Activated CD4-positive, alpha-beta memory T cell treated with anti-CD3 and anti-CD28 coated beads, Interleukin-2, amount 10 ng/mL, durations not matched to agents 7 days and 5 days (primary cell): ENCODE measurements at regions of chr1 and their contacts with region 1.

Region 1: DNA sequence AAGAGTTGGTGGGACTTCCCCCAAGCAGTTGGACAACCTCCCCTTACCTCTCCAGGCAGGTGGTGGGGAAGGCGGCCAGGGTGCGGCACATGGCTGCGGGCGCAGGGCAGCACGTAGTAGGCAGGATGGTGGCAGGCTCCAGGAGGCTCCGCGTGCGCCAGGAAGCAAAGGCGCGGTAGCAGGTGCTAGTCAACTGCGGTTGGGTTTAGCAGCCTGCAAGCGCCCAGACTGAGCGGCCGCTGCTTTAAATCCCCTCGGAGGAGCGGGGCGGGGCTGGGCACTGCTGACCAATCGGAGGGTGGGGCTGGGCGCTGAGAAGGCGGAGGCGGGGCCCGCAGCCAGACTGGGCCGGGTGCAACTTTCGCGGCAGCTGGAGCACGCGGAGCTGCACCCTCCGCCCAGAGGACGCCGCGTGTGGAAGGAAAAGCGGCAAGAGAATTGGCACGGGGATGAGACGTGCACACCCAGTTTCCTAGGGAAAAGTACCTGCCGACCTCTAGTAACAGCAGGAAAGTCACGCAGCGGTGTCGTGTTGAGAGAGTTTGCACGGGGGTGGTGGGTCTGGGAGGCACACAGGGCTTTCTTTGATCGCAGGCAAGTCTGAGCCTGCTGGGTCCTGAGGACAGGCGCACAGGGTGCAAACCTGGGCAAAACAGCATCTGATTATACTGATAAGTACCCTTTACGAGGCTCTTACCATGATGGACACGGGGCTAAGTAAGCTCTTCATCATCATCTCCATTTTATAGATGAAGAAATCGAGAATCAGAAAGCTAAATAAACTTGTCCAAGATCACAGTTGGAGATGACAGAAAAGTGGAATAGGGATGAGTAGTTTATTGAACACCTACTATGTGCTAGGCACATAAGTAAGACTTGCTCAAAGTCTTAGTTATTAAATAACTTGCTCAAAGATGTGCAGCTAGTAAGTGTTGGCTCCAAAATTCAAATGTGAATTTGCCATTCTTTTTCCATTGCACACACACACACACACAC is at the start of gene RGS16:
- DNase-seq: peak; percentile 94
- H3K4me3 Mint-ChIP-seq: no peak within 1 kb of the TSS
- H3K27ac Mint-ChIP-seq: no peak within 1 kb of the TSS
- H3K4me1 Mint-ChIP-seq: peaks cover 11% of the 10 kb centered on the region
- H3K27me3 Mint-ChIP-seq: peaks cover 30% of the 10 kb centered on the region
- total RNA-seq, gene RGS16: 6.4 to 6.9 TPM

Region 2: DNA sequence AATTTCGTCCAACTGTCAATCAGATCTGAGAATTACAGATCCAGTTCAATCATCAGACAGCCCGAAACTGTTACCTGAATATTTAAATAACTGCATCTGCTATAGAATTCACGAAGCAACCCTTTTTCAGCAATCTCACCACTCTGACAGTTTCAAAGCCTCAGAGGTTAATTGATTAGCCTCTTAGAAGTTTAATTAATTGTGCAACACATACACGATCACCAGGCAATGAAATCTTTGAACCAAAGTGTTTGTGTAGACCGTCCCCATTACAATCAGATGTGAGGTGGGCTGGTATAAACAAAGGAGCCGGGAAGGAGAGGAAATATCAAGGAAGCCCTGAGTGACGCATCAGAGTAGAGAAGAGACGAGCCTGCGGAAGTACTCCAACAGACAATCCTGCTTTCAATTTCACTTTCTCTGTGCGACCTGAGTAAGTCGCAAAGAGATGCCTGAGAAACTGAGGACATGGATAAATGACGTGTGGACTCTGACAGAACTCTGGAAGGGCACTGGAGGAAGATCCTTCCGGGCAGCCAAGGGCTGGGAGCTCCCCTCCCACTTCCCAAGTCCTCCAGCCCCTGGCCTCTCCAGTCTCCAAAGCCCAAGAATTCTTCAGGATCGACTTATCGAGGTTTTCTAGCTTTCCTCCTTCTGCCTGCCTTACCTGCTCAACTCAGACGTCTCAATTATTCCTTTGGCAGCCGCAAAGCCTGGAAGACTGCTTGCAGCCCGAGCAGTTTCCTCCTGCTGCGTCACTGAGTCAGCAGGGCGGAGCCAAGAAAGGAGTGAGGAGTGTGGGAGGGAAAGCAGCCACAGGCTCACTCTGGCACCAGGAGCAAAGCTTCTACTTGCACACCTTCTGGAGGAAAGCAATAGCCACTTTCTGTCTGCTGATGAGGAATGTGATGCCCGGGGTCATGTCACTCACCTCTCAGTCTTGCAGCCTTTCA is 15.7 kb before region 1 on chr1 and contains the start of gene RNASEL:
- CTCF ChIA-PET with region 1: interaction called, 52 read pairs
- POLR2A ChIA-PET with region 1: interaction called, 10 read pairs
- DNase-seq: peak; percentile 61
- H3K4me3 Mint-ChIP-seq: peak within 1 kb of the TSS; percentile 94
- H3K27ac Mint-ChIP-seq: peak within 1 kb of the TSS; percentile 94
- H3K4me1 Mint-ChIP-seq: peaks cover 33% of the 10 kb centered on the region
- H3K27me3 Mint-ChIP-seq: peaks cover 6% of the 10 kb centered on the region
- total RNA-seq, gene RNASEL: 8.4 to 8.8 TPM

Region 3: GRCh38 chr1:182614796-182615454 is 10.5 kb after region 1 on chr1:
- CTCF ChIA-PET with region 1: interaction called, 38 read pairs
- POLR2A ChIA-PET with region 1: interaction called, 79 read pairs
- DNase-seq: peak; percentile 52
- H3K4me3 Mint-ChIP-seq: peak overlapping the region; percentile 66
- H3K27ac Mint-ChIP-seq: peak overlapping the region; percentile 79
- H3K4me1 Mint-ChIP-seq: peaks cover 45% of the 10 kb centered on the region
- H3K27me3 Mint-ChIP-seq: peaks cover 78% of the 10 kb centered on the region

Region 4: GRCh38 chr1:182629499-182630096 is 25.1 kb after region 1 on chr1:
- CTCF ChIA-PET with region 1: interaction called, 4 read pairs
- POLR2A ChIA-PET with region 1: interaction called, 11 read pairs
- DNase-seq: peak; percentile 64
- H3K4me3 Mint-ChIP-seq: no peak overlapping the region
- H3K27ac Mint-ChIP-seq: no peak overlapping the region
- H3K4me1 Mint-ChIP-seq: peaks cover 60% of the 10 kb centered on the region
- H3K27me3 Mint-ChIP-seq: peaks cover 23% of the 10 kb centered on the region

Region 5: DNA sequence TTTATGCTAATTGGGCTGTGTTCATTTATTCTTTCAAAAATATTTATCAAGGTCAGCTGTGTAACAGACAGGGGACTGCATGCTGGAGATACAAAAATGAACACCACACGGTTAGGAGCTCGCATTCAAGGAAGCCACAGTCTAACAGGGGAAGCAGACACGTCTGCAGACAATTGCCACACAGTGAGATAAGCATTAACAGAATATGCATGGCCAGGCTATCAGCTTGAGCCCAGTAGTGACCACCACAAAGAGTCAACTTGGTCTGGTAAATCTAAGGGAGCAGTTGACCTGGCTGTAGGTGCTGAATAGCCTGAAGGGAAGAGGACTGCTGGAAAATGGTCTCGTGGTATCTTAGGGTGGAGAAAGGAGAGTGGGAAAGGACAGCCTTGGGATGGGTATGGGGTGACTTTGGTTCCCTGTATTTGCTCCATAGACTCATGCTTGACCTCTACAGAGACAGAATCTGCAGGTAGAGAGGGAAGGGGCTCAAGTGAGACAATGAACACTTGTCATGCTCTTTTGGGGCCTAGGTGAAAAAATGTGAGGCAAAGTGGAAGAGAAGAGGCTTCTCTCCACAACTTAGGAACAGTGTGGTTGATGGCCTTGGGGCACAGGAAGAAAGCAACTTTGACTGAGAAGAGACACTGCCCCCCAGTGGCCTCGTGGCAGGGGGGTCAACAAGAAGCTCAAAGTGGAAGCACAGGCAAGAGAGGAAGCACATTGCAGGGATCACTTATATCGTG is 177.5 kb after region 1 on chr1:
- CTCF ChIA-PET with region 1: interaction called, 531 read pairs
- POLR2A ChIA-PET with region 1: interaction called, 11 read pairs
- DNase-seq: peak; percentile 76
- H3K4me3 Mint-ChIP-seq: no peak overlapping the region
- H3K27ac Mint-ChIP-seq: no peak overlapping the region
- H3K4me1 Mint-ChIP-seq: peaks cover 9% of the 10 kb centered on the region
- H3K27me3 Mint-ChIP-seq: peaks cover 11% of the 10 kb centered on the region

Region 6: DNA sequence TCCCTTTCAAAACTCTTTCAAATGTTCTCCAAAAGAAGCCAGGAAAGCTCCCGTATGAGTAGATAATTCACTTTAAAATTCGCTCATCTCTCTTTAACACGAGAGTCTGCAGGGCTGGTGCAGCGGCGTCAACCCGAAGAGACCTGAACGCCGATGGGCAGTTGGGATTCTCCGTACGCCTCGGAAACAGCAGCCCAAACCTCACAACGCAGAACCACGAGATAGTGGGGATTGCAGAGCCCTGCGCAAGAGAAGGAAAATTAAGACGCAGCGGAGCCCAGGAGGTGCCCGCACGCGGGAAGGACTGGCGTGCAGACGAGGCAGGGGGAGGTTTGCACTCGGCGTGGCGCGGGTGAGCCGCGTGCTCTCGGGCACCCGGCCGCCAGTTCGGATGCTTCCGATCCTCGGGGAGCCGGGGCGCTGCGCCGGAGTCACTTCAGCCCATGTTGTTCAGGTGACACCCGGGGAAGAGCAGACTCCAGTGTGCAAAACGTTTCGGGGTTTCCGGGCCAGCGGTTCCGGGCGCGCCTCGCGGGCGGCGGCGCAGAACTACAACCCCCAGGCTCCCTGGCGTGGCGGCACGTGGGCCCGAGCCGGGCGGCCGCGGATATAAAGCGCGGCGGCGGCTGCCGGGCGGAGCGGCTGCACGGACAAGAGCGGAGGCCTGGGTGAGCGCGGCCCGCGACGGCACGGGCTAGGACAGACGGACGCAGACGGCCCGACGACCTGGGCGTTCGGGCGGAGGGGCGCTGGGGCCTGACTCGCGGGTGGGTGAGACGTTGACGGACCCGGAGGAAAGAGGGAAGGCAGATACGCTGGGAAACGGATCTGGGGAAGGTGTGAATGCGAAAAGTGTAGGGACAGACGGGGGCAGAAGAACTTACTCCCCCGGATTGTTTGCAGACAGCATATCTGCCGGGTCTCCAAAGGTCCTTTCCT is 184.9 kb after region 1 on chr1 and contains the start of gene NPL:
- CTCF ChIA-PET with region 1: interaction called, 531 read pairs
- POLR2A ChIA-PET with region 1: interaction called, 7 read pairs
- DNase-seq: peak; percentile 88
- H3K4me3 Mint-ChIP-seq: peak within 1 kb of the TSS; percentile 78
- H3K27ac Mint-ChIP-seq: peak within 1 kb of the TSS; percentile 47
- H3K4me1 Mint-ChIP-seq: peaks cover 15% of the 10 kb centered on the region
- H3K27me3 Mint-ChIP-seq: peaks cover 25% of the 10 kb centered on the region
- total RNA-seq, gene NPL: 3.7 to 5.0 TPM